HepG2 (cell line): ENCODE measurements at regions of chr5 and their contacts with region 1.

Region 1: GRCh38 chr5:79514391-79515105 is 614 bp upstream of the HOMER1 start:
- DNase-seq: peak; percentile 72
- ATAC-seq: peak; percentile 75
- H3K4me3 ChIP-seq: peak overlapping the region; percentile 82 to 88 (median 88)
- H3K27ac ChIP-seq: peak overlapping the region; percentile 93
- H3K4me1 ChIP-seq: peaks cover 32% of the 10 kb centered on the region
- H3K27me3 ChIP-seq: no peaks in the 10 kb centered on the region; a peak in 1 of 5 replicates
- CTCF ChIP-seq: no peak
- EP300 ChIP-seq: no peak
- POLR2A ChIP-seq: peak; percentile 81 to 89
- RAD21 ChIP-seq: no peak

Region 2: GRCh38 chr5:79235634-79236363 is 278.7 kb before region 1 on chr5 and contains the start of gene JMY:
- CTCF ChIA-PET with region 1: no interaction called
- POLR2A ChIA-PET with region 1: no interaction called
- in situ Hi-C with region 1: no loop called
- intact Hi-C with region 1: loop called (anchors 5 kb)
- DNase-seq: peak; percentile 75
- ATAC-seq: peak; percentile 82
- H3K4me3 ChIP-seq: peak within 1 kb of the TSS; percentile 94 to 98 (median 95)
- H3K27ac ChIP-seq: peak within 1 kb of the TSS; percentile 98
- H3K4me1 ChIP-seq: peaks cover 20% of the 10 kb centered on the region
- H3K27me3 ChIP-seq: no peaks in the 10 kb centered on the region; a peak in 1 of 5 replicates
- CTCF ChIP-seq: peak; percentile 35; the same call in 1 of the 2 replicates
- EP300 ChIP-seq: no peak
- POLR2A ChIP-seq: peak; percentile 73 to 92
- RAD21 ChIP-seq: no peak; the same call in 1 of the 2 replicates
- total RNA-seq, gene JMY: 4.0 and 7.4 TPM in 2 replicates

Region 3: GRCh38 chr5:79503794-79504495 is 10.6 kb before region 1 on chr5:
- CTCF ChIA-PET with region 1: no interaction called
- POLR2A ChIA-PET with region 1: interaction called, 10 read pairs
- in situ Hi-C with region 1: no loop called
- intact Hi-C with region 1: no loop called
- DNase-seq: no peak
- ATAC-seq: no peak
- H3K4me3 ChIP-seq: no peak overlapping the region
- H3K27ac ChIP-seq: no peak overlapping the region
- H3K4me1 ChIP-seq: peaks cover 45% of the 10 kb centered on the region
- H3K27me3 ChIP-seq: no peaks in the 10 kb centered on the region
- CTCF ChIP-seq: no peak
- EP300 ChIP-seq: peak in 1 of 2 experiments; percentile 36; a peak in 1 of 4 replicates
- POLR2A ChIP-seq: no peak
- RAD21 ChIP-seq: no peak

Region 4: GRCh38 chr5:79527431-79527830 is 12.9 kb after region 1 on chr5:
- CTCF ChIA-PET with region 1: no interaction called
- POLR2A ChIA-PET with region 1: interaction called, 10 read pairs
- in situ Hi-C with region 1: no loop called
- intact Hi-C with region 1: no loop called
- DNase-seq: no peak
- ATAC-seq: no peak
- H3K4me3 ChIP-seq: no peak overlapping the region
- H3K27ac ChIP-seq: no peak overlapping the region
- H3K4me1 ChIP-seq: no peaks in the 10 kb centered on the region
- H3K27me3 ChIP-seq: no peaks in the 10 kb centered on the region
- CTCF ChIP-seq: no peak
- EP300 ChIP-seq: no peak
- POLR2A ChIP-seq: no peak
- RAD21 ChIP-seq: no peak

Region 5: DNA sequence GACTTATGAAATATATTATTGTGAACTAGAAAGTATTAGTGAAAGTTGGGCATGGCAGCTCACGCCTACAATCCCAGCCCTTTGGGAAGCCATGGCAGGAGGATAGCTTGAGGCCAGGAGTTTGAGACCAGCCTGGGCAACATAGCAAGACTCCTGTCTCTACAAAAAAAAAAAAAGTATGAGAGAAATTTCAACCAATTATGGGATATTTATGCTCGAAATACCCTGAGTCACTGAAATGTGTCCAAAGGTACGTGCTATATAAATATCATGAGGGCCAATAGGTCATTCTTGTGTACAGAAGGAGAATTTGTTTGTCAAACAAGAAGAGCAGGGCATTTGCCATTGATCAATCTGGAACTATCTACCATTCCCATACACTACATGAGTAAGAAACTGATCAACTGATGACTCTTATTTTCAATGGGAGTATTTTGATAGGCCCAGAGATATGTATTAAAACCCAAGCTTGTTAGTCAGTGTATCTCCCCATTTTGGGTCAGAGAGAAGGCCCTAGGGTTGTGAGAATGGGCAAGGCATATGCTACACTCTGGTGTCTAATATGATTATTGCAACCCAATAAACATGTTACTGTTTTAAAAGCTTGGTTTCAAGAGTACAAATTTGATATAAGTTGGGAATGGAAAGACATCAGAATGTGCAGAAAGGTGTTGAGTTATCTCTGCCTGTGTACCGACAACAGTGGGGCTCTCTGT is 21.1 kb after region 1 on chr5:
- CTCF ChIA-PET with region 1: no interaction called
- POLR2A ChIA-PET with region 1: interaction called, 18 read pairs
- in situ Hi-C with region 1: no loop called
- intact Hi-C with region 1: loop called (anchors 1 kb)
- DNase-seq: peak; percentile 87
- ATAC-seq: peak; percentile 94
- H3K4me3 ChIP-seq: no peak overlapping the region
- H3K27ac ChIP-seq: peak overlapping the region; percentile 48
- H3K4me1 ChIP-seq: peaks cover 57% of the 10 kb centered on the region
- H3K27me3 ChIP-seq: no peaks in the 10 kb centered on the region
- CTCF ChIP-seq: peak; percentile 21; the same call in 1 of the 2 replicates
- EP300 ChIP-seq: peak; percentile 49 to 89; a peak in 3 of 4 replicates
- POLR2A ChIP-seq: no peak
- RAD21 ChIP-seq: no peak

Region 6: DNA sequence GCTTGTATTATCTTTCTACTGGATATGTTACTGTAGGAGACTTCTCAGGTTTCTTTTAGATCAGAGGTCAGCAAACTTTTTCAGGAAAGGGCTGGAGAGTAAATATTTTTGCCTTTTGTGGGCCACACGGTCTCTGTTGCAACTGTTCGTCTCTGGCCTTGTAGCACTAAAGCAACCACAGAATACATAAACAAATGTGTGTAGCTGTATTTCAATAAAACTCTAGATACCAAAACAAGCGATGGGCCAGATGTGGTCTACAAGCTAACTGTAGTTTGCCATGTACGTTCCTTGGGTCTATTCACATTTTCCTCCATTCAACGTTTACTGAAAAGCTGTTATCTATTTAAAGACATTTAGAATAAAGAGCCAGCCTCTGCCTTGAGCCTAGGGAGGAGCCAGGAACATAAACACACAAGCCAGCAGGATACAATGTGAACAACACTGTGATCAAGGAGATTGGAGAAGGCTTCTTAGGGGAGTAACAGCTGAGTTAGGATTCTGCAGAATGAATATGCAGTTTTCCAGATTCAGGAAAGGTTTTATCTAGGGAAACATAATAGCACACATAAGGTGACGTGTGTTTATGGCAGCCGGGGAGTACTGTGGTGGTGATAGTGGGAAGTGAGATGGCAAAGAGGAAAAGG is 32.4 kb after region 1 on chr5:
- CTCF ChIA-PET with region 1: no interaction called
- POLR2A ChIA-PET with region 1: interaction called, 37 read pairs
- in situ Hi-C with region 1: no loop called
- intact Hi-C with region 1: loop called (anchors 5 kb)
- DNase-seq: peak; percentile 82
- ATAC-seq: peak; percentile 88
- H3K4me3 ChIP-seq: peak overlapping the region; percentile 46 to 63 (median 46)
- H3K27ac ChIP-seq: peak overlapping the region; percentile 70
- H3K4me1 ChIP-seq: peaks cover 60% of the 10 kb centered on the region
- H3K27me3 ChIP-seq: no peaks in the 10 kb centered on the region
- CTCF ChIP-seq: no peak
- EP300 ChIP-seq: peak in 1 of 2 experiments; percentile 80; a peak in 2 of 4 replicates
- POLR2A ChIP-seq: no peak
- RAD21 ChIP-seq: no peak

Region 7: DNA sequence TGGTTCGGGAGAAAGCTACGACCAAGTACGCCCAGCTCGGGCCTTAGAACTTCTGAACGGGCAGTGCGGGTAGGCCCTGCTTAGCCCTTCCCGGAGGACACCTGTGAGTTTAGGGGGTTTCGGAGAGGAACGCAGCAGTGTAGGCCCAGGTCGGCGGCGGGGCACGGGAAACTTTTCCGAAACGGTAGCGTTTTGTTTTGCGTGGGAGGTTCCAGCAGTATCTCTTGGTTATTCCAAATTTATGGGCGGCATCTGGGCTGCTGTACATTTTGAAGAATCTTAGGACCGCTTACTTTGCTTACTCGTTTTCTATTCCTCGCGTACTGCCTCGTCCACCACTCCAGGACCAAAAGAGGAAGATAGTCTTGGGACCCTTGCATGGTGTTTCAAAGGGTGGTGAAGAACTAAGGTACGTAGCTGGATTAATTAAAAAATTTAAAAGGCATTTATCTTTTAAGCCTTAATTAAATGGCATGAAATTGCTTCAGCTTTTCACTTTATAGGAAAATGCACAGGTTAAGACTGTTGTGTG is 98.2 kb after region 1 on chr5:
- CTCF ChIA-PET with region 1: no interaction called
- POLR2A ChIA-PET with region 1: interaction called, 16 read pairs
- in situ Hi-C with region 1: no loop called
- intact Hi-C with region 1: no loop called
- DNase-seq: peak; percentile 3
- ATAC-seq: peak; percentile 56
- H3K4me3 ChIP-seq: peak overlapping the region; percentile 74 to 96 (median 96)
- H3K27ac ChIP-seq: peak overlapping the region; percentile 94
- H3K4me1 ChIP-seq: peaks cover 33% of the 10 kb centered on the region
- H3K27me3 ChIP-seq: no peaks in the 10 kb centered on the region; a peak in 1 of 5 replicates
- CTCF ChIP-seq: no peak
- EP300 ChIP-seq: no peak
- POLR2A ChIP-seq: no peak
- RAD21 ChIP-seq: no peak